Activated naive CD8-positive, alpha-beta T cell treated with anti-CD3 and anti-CD28 coated beads, Interleukin-2, amount 10 ng/mL, durations not matched to agents 7 days and 5 days (primary cell): ENCODE measurements at regions of chr16 and their contacts with region 1.

Region 1: DNA sequence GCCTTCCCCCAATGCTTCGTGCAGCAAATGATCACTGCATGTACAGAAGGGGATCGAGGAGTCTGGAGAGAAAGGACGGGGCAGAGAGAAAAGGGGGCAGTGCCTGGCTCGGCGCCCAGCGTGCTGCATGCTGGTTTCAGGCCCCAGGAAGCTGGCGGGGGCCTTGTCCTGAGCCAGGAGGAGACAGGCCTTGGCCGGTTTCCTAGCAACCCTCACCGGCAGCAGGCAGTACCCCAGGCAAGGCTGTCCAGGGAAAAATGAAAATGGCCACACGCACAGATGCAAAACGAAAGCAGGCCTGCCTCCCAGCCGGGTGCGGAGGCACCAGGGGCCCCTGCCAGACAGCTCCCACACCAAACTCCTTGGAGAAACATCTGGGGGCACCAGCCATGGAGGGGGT is 126.3 kb downstream of the ZFHX3 start:
- DNase-seq: no peak
- ATAC-seq: no peak
- H3K4me3 Mint-ChIP-seq: peak overlapping the region; percentile 71
- H3K27ac Mint-ChIP-seq: peak overlapping the region; percentile 94
- H3K4me1 Mint-ChIP-seq: peaks cover 27% of the 10 kb centered on the region
- H3K27me3 Mint-ChIP-seq: peaks cover 5% of the 10 kb centered on the region

Region 2: DNA sequence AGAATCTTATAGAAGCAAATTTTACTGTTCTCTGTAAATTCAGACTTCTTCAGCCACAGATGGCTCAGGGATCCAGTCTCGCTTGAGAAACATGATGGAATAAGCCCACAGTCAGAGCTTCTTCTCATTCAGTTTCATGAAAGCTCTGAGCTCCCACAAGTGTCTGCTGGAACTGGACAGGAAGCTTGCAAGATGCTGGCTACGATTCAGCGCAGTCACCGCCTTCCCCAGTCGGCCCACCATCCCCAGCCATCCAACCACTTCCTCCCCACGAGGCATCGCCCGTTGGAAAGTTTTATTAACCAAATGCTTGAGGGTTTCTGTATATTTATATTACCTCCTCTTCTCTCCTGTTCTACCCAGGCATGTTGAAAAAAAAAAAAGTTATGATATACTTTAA is 45.4 kb before region 1 on chr16:
- POLR2A ChIA-PET with region 1: interaction called, 20 read pairs
- DNase-seq: peak; percentile 66
- ATAC-seq: peak; percentile 86
- H3K4me3 Mint-ChIP-seq: peak overlapping the region; percentile 40
- H3K27ac Mint-ChIP-seq: peak overlapping the region; percentile 40
- H3K4me1 Mint-ChIP-seq: peaks cover 21% of the 10 kb centered on the region
- H3K27me3 Mint-ChIP-seq: no peaks in the 10 kb centered on the region

Region 3: GRCh38 chr16:72932050-72932449 is 10.4 kb after region 1 on chr16:
- POLR2A ChIA-PET with region 1: interaction called, 28 read pairs
- DNase-seq: no peak
- ATAC-seq: peak; percentile 81
- H3K4me3 Mint-ChIP-seq: peak overlapping the region; percentile 46
- H3K27ac Mint-ChIP-seq: peak overlapping the region; percentile 74
- H3K4me1 Mint-ChIP-seq: peaks cover 20% of the 10 kb centered on the region
- H3K27me3 Mint-ChIP-seq: peaks cover 8% of the 10 kb centered on the region